ENCODE measurements at regions of chr20 and their contacts with region 1.

Region 1: DNA sequence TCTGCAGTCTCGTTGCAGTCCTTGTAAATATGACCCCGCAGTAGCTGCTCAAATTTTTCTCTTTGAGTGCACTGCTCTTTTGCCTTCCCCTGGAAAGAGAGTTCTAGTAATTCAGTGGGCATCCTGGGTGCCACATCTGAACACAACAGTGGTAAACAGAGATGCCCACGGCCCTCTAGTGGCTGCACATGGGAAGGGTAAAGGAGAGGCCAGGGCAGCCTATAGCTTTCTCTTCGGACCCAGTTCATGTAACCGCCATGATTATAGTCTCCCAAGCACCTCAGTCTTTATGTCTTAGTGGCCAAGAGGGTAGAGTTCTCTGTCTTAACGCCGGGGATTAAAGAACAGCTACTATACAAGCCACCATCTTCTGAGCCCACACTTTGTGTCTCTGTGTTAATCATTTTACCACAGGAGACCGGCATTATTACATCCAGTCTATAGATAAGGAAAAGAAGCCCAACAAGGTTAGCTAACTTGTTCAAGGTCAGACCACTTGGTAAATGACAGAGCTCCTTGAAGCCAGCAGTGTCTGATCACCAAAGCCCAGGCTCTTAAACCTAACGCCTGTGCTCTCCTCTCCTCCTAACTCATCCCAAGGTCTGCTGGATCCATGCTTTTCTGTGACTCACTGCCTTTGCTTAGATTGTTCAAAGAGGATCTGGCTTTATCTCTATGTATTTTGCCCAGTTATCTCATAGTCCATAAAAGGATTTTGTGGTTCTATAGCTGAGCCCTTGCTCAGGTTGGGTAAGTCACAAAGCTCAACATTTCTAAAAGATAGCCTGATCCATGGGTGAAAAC is 81.8 kb downstream of the ISM1 start:
- DNase-seq: peak; percentile 83
- H3K4me3 Mint-ChIP-seq: no peak overlapping the region
- H3K27ac Mint-ChIP-seq: no peak overlapping the region
- H3K4me1 Mint-ChIP-seq: peaks cover 4% of the 10 kb centered on the region
- H3K27me3 Mint-ChIP-seq: no peaks in the 10 kb centered on the region

Region 2: DNA sequence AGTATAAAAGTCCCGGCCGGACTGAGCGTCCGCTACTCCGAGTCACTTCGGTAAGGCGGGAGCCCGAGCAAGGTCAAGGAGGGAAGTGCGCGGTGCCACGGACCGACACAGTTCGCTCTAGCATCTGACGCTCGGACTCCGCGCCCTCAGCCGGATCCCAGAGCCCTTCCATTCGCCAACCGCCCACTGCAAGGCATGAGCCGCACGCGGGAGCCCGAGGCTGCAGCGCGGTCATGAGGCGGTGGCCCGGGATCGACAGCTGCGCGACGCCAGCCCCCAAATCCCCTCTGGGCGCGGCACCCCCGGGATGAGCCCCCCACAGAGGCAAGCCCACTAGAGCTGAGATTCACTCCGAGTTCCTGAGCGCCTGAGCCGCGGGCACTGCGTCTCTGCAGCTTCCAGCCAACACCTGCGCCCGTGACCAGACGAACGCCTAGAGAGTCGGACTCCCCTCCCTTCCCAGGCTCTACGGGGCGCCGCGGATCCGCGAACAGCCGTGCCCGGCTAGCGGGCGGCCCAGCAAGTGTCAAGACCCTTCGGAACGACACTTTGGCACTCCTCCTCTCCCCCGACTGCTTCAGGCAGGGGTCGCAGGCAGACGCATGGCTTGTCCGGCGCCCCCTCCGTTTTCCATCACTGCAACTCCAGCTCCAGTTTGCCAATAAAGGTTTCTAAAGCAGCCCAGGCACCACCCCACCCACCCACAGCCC is 82.5 kb before region 1 on chr20:
- intact Hi-C with region 1: no loop called
- DNase-seq: peak; percentile 77
- H3K4me3 Mint-ChIP-seq: peak overlapping the region; percentile 85
- H3K27ac Mint-ChIP-seq: peak overlapping the region; percentile 82
- H3K4me1 Mint-ChIP-seq: peaks cover 16% of the 10 kb centered on the region
- H3K27me3 Mint-ChIP-seq: peaks cover 68% of the 10 kb centered on the region

Region 3: DNA sequence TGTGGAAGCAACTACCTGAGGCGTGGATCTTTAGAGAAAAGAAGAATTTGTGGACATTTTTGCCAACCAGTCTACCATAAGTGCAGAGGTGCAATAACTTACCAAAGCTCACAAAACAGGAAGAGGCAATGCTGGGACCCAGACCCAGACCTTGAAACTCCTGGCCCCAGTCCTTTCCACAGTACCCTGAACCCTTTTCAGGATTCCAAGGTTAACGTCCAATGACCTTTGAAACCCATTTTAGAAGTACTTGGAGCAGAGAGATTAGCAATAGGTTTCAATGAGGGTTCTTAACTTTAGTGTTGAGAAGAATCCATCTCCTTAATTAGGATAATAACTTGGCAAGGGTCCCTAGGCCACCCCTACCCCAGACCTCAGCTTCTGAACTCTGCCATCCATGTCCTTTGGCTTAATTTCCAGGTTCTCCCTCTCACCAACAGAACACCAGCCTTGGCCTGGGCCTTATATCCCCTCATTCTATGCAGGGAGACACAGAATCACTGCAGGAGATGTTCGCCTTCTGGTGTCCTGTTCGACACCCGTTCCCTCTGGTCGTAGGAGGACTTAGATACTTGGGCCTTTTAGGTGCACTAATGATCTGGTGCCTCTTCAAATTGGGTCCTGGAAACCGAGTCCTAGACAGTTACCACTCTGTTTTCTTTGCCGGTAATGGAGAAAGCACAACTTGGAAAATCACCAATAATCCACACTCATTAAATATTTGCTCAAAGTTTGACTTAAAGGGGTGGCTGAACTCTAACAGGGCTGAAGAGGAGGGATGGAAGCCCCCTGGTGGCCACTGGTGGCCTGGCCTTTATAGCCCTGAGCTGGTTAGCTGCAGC is 41.2 kb before region 1 on chr20:
- intact Hi-C with region 1: no loop called
- DNase-seq: peak; percentile 89
- H3K4me3 Mint-ChIP-seq: no peak overlapping the region
- H3K27ac Mint-ChIP-seq: no peak overlapping the region
- H3K4me1 Mint-ChIP-seq: peaks cover 12% of the 10 kb centered on the region
- H3K27me3 Mint-ChIP-seq: no peaks in the 10 kb centered on the region

Region 4: DNA sequence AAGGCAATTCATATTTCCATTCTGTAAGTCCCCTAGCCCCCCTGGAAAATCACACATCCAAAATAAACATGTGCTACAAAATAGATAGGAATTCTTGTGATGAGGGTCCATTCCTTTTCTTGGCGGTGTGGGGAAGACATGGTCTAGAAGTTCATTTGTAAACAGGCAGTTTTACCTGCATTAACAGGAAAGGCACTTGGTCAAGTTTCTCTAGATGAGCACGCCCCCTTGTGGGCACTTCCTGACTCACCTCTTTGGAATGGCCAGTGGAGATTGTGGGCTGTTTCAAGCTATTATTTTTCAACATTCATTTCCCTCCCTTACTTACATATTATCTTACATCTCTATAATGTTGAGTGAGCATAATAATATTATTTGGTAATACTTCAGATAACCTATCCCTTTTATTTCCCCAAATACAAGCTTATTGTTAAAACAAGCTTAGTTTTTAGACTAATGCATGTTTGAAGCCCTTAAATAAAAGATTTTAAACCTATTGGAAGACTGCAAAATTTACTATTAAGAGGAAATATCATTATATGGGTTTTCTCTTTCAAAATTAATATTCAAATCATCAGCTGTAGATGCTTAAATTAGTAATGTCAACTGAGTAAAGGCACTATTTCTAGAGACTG is 243.8 kb after region 1 on chr20:
- intact Hi-C with region 1: loop called (anchors 5 kb)
- DNase-seq: peak; percentile 90
- H3K4me3 Mint-ChIP-seq: no peak overlapping the region
- H3K27ac Mint-ChIP-seq: no peak overlapping the region
- H3K4me1 Mint-ChIP-seq: peaks cover 2% of the 10 kb centered on the region
- H3K27me3 Mint-ChIP-seq: no peaks in the 10 kb centered on the region

Region 5: GRCh38 chr20:13638496-13639222 is 335.8 kb after region 1 on chr20 and contains the start of gene TASP1:
- intact Hi-C with region 1: loop called (anchors 10 kb)
- DNase-seq: peak; percentile 98
- H3K4me3 Mint-ChIP-seq: peak within 1 kb of the TSS; percentile 99
- H3K27ac Mint-ChIP-seq: peak within 1 kb of the TSS; percentile 85
- H3K4me1 Mint-ChIP-seq: peaks cover 20% of the 10 kb centered on the region
- H3K27me3 Mint-ChIP-seq: peaks cover 3% of the 10 kb centered on the region
- total RNA-seq, gene TASP1: 14.6 and 14.9 TPM in 2 replicates